ENCODE measurements at regions of chr6 and their contacts with region 1.

Region 1: DNA sequence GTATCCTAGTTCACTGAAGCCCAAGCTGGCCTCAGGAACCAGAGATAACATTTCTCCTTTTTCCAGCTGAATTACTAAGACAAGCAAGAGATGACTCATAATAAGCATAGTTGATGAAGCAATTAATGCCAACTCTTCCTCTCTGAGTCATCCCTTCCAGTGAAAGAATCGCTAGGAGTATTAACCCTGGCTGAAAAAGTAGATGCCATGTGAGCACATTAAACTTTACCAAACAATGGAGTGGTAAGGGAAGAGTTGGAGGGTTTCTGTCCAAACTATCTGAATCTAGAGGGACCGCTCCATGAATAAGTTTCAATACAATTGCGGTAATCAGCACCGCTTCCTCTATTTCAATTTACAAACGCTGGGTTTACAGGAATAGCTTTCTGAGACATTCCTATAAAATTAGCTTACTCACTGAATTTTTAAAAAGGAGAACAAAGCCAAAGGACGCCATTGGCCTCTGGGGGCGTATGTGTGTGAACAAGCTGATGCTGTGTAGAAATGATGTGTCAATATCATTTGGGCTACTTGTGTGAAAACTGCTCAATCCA is 48.3 kb downstream of the ATXN1 start:
- DNase-seq: peak; percentile 47
- ATAC-seq: peak; percentile 37
- H3K4me3 Mint-ChIP-seq: peak overlapping the region; percentile 68
- H3K27ac Mint-ChIP-seq: peak overlapping the region; percentile 92
- H3K4me1 Mint-ChIP-seq: peaks cover 62% of the 10 kb centered on the region
- H3K27me3 Mint-ChIP-seq: no peaks in the 10 kb centered on the region
- CTCF ChIP-seq: peak; percentile 44

Region 2: DNA sequence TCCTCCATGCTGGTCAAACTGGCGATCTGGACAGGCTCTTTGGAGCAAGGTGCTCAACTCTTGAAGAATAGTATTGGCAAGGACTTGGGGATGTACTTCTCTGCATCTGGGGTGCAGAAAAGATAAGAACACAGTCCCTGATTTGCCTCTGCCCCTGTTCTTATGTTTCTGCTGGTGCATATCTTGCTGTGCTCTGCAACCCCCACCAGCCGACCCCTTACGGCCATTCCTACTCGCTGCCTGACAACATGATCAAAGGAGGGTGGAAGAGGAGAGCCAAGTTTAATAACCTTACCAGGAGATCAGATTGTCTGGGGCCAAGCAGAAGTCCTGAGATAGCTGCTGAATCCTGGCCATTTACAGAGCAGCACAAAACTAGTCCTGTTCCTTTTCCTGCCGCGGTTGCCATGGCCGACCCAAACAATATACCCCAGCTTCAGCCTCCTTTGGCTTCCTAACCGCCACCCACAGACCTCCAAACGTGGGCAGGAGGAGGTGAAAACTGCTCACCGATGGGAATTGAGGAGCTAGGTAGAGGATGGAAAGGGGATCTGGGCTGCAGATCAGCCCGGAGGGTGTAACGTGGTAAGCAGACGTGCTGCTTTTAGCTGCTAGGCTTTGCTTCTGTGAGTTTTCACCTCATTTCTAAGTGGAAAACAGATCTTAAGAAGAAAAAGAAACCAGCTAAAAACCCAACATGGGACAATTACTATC is 12.6 kb before region 1 on chr6:
- CTCF ChIA-PET with region 1: interaction called, 8 read pairs
- POLR2A ChIA-PET with region 1: interaction called, 8 read pairs
- intact Hi-C with region 1: loop called (anchors 2 kb)
- DNase-seq: peak; percentile 75
- ATAC-seq: peak; percentile 17
- H3K4me3 Mint-ChIP-seq: peak overlapping the region; percentile 74
- H3K27ac Mint-ChIP-seq: peak overlapping the region; percentile 99
- H3K4me1 Mint-ChIP-seq: peaks cover 69% of the 10 kb centered on the region
- H3K27me3 Mint-ChIP-seq: no peaks in the 10 kb centered on the region
- CTCF ChIP-seq: no peak

Region 3: GRCh38 chr6:16731478-16732051 is 18.6 kb after region 1 on chr6:
- CTCF ChIA-PET with region 1: interaction called, 13 read pairs
- POLR2A ChIA-PET with region 1: interaction called, 18 read pairs
- intact Hi-C with region 1: no loop called
- DNase-seq: peak; percentile 73
- ATAC-seq: peak; percentile 85
- H3K4me3 Mint-ChIP-seq: peak overlapping the region; percentile 65
- H3K27ac Mint-ChIP-seq: peak overlapping the region; percentile 87
- H3K4me1 Mint-ChIP-seq: peaks cover 68% of the 10 kb centered on the region
- H3K27me3 Mint-ChIP-seq: no peaks in the 10 kb centered on the region
- CTCF ChIP-seq: no peak

Measured in activated CD8-positive, alpha-beta T cell treated with anti-CD3 and anti-CD28 coated beads for 36 hours (primary cell).